Caco-2 (cell line): ENCODE measurements at regions of chr4 and their contacts with region 1.

Region 1: GRCh38 chr4:48578132-48578968 is 88.3 kb downstream of the ZAR1 start:
- DNase-seq: peak; percentile 45 to 61
- H3K4me3 ChIP-seq: no peak overlapping the region
- H3K4me3 Mint-ChIP-seq: no peak overlapping the region
- H3K27ac Mint-ChIP-seq: no peak overlapping the region
- H3K4me1 ChIP-seq: no peaks in the 10 kb centered on the region
- H3K4me1 Mint-ChIP-seq: no peaks in the 10 kb centered on the region
- H3K27me3 ChIP-seq: no peaks in the 10 kb centered on the region
- H3K27me3 Mint-ChIP-seq: no peaks in the 10 kb centered on the region
- CTCF ChIP-seq: peak; percentile 68 to 73

Region 2: GRCh38 chr4:48518143-48518542 is 60.2 kb before region 1 on chr4:
- CTCF ChIA-PET with region 1: no interaction called
- POLR2A ChIA-PET with region 1: no interaction called
- intact Hi-C with region 1: no loop called
- DNase-seq: no peak
- H3K4me3 ChIP-seq: no peak overlapping the region
- H3K4me3 Mint-ChIP-seq: no peak overlapping the region
- H3K27ac Mint-ChIP-seq: no peak overlapping the region
- H3K4me1 ChIP-seq: no peaks in the 10 kb centered on the region
- H3K4me1 Mint-ChIP-seq: no peaks in the 10 kb centered on the region
- H3K27me3 ChIP-seq: no peaks in the 10 kb centered on the region
- H3K27me3 Mint-ChIP-seq: no peaks in the 10 kb centered on the region
- CTCF ChIP-seq: no peak

Region 3: DNA sequence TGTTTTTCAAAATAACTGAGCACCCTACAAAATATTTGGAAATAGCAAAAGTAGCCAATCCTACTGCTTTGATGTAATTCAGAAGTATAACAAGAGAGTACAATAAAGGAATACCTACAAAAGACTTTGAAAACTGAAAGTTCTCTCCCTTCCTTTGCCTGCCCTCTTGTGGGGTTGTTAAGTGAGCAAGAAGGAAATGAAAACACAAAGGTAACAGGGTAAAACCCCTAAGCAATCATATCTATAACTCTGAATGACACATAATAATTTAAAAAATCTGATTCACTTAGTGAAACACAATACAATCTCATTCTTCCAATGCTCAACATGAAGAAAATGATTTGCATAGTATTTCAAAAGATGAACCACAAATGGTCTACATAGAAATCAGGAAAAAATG is 103.5 kb after region 1 on chr4:
- CTCF ChIA-PET with region 1: interaction called, 3 read pairs
- POLR2A ChIA-PET with region 1: no interaction called
- intact Hi-C with region 1: loop called (anchors 1 kb)
- DNase-seq: peak in 1 of 2 experiments; percentile 12
- H3K4me3 ChIP-seq: no peak overlapping the region
- H3K4me3 Mint-ChIP-seq: no peak overlapping the region
- H3K27ac Mint-ChIP-seq: no peak overlapping the region
- H3K4me1 ChIP-seq: peaks cover 7% of the 10 kb centered on the region; the same call in 1 of the 2 replicates
- H3K4me1 Mint-ChIP-seq: peaks cover 6% of the 10 kb centered on the region
- H3K27me3 ChIP-seq: no peaks in the 10 kb centered on the region
- H3K27me3 Mint-ChIP-seq: no peaks in the 10 kb centered on the region
- CTCF ChIP-seq: peak; percentile 22 to 42

Region 4: GRCh38 chr4:48830706-48831531 is 252.6 kb after region 1 on chr4 and contains the start of gene OCIAD1:
- CTCF ChIA-PET with region 1: no interaction called
- POLR2A ChIA-PET with region 1: no interaction called
- intact Hi-C with region 1: loop called (anchors 10 kb)
- DNase-seq: peak; percentile 96 to 98
- H3K4me3 ChIP-seq: peak within 1 kb of the TSS; percentile 97
- H3K4me3 Mint-ChIP-seq: peak within 1 kb of the TSS; percentile 98
- H3K27ac Mint-ChIP-seq: peak within 1 kb of the TSS; percentile 99
- H3K4me1 ChIP-seq: no peaks in the 10 kb centered on the region
- H3K4me1 Mint-ChIP-seq: peaks cover 8% of the 10 kb centered on the region
- H3K27me3 ChIP-seq: no peaks in the 10 kb centered on the region
- H3K27me3 Mint-ChIP-seq: no peaks in the 10 kb centered on the region
- CTCF ChIP-seq: no peak
- total RNA-seq, gene OCIAD1: 121 and 133 TPM in 2 replicates

Region 5: GRCh38 chr4:48898733-48899431 is 320.5 kb after region 1 on chr4:
- CTCF ChIA-PET with region 1: interaction called, 8 read pairs
- POLR2A ChIA-PET with region 1: no interaction called
- intact Hi-C with region 1: loop called (anchors 10 kb)
- DNase-seq: no peak
- H3K4me3 ChIP-seq: no peak overlapping the region
- H3K4me3 Mint-ChIP-seq: no peak overlapping the region
- H3K27ac Mint-ChIP-seq: no peak overlapping the region
- H3K4me1 ChIP-seq: no peaks in the 10 kb centered on the region
- H3K4me1 Mint-ChIP-seq: no peaks in the 10 kb centered on the region
- H3K27me3 ChIP-seq: no peaks in the 10 kb centered on the region
- H3K27me3 Mint-ChIP-seq: no peaks in the 10 kb centered on the region
- CTCF ChIP-seq: no peak